PC-9 (cell line): ENCODE measurements at regions of chr18 and their contacts with region 1.

Region 1: DNA sequence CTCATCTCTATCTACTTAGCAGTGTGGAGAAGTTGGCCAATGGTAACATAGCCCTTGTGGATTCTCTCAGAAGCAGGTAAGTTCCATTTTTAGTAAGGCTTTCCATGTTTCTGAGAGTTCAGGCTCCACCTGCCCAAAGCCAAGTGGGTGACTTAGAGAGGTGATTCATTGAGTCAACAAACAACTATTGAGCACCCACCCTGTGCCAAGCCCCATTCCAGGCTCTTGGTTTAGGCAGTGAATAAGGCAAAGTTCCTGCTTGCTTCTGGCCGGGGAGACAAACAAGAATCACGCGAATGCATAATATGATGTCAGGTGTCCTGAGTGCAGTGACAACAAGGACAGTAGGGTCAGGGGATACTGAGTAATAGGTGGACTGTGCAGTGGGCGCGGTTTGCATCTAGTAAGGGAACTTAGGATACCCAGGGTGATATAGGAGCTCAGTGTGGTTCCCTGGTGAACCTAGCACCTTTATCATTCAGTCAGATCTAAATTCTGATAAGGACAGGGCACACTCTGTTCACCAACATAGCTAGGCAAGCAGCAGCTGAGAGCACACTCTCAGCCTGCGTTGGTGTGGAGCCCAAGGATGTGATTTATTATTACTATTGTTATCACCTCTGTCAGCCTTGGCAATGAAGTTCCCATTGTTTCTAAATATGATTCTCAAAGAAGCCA is 31.7 kb upstream of the KCTD1 start:
- DNase-seq: peak; percentile 73 to 94
- H3K4me3 ChIP-seq: no peak overlapping the region; the same call in 1 of the 2 replicates
- H3K27ac ChIP-seq: peak overlapping the region; percentile 78
- H3K4me1 ChIP-seq: peaks cover 26% of the 10 kb centered on the region
- H3K27me3 ChIP-seq: no peaks in the 10 kb centered on the region
- CTCF ChIP-seq: no peak

Region 2: DNA sequence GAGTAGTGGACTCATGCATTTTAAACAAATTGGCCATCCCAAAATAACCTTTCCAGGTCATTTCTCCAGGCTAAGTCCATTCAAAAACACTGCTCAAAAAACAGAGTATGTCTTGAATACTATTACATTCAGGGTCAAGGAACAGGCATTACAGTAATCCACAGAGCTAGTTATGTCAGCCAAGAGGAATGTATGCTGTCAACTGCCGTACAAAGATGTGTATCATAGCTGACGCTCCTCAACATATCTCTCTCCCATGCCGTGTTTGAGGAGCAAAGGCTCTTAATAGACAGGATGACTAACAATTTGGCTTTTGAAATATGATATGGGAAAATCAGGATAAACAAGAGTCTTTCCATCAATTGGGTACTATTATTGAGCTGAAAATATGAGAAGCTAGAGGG is 37.1 kb after region 1 on chr18:
- CTCF ChIA-PET with region 1: no interaction called
- POLR2A ChIA-PET with region 1: no interaction called
- intact Hi-C with region 1: loop called (anchors 1 kb)
- DNase-seq: peak; percentile 20 to 92
- H3K4me3 ChIP-seq: no peak overlapping the region
- H3K27ac ChIP-seq: peak overlapping the region; percentile 54
- H3K4me1 ChIP-seq: peaks cover 21% of the 10 kb centered on the region
- H3K27me3 ChIP-seq: no peaks in the 10 kb centered on the region
- CTCF ChIP-seq: no peak